ENCODE measurements at regions of chr4 and their contacts with region 1.

Region 1: GRCh38 chr4:115851918-115852766 is 738.7 kb upstream of the NDST4 start:
- DNase-seq: peak; percentile 12
- CTCF ChIP-seq: peak; percentile 59

Region 2: DNA sequence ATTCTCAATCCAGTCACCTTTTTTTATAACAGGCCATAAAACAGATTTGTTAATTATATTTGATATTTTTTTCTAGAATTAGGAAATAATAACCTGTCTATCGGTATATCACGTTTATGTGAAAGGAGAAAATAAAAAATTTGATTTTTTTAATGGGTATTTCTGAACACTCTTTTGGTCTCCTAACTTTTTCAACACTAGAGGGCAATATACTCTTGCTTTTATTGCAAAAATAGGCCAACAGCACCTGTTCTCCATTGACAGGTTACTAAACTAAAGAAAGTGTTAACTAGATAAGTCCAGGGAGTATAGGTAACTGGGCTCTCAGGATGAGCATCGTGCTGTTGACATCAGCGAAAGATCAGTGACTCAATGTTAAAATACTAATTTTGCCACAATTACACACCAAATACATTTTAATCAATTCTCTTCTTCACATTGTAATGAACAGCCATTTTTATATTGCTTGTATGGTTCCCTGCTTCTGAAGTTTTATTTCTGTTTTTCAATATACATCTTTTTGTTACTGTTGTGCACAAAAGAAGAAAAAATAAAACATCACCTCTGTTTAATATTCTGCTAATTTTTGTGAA is 761.6 kb before region 1 on chr4:
- in situ Hi-C with region 1: loop called (anchors 25 kb)
- DNase-seq: peak; percentile 6
- CTCF ChIP-seq: no peak

Measured in GM13976 (cell line).